ENCODE measurements at regions of chr15 and their contacts with region 1.

Region 1: GRCh38 chr15:40044717-40045571 is 6.0 kb upstream of the SRP14 start:
- DNase-seq: peak; percentile 88 to 93
- ATAC-seq: peak; percentile 90 to 96 (median 94)
- H3K4me3 ChIP-seq: peak overlapping the region; percentile 29
- H3K27ac ChIP-seq: peak overlapping the region; percentile 51
- H3K4me1 ChIP-seq: peaks cover 30% of the 10 kb centered on the region
- H3K27me3 ChIP-seq: no peaks in the 10 kb centered on the region
- CTCF ChIP-seq: peak; percentile 91

Region 2: DNA sequence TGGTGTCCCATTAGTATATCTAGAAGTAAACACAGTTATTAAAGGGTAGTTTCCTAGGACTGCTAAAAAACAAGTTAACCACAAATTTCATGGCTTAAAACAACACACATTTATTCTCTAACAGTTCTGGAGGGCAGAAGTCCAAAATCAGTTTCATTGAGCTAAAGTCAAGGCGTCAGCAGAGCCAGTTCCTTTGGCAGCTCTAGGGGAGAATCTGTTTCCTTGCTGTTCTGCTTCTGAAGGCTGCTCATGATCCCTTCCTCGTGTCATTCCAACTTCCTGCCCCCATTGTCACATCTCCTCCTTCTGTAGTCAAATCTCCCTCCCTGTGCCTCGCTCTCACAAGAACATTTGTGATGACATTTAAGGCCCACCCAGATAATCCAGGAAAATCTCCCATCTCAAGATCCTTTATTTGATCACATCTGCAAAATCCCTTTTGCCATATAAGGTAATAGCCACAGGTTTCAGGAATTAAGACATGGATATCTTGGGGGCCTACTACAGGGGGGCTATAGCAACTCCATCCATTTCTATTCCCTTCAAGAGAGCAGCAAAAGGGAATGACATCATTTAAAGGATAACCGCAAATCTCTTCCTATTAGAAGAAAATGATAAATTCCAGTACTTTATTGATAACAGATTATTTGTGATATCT is 175.0 kb before region 1 on chr15:
- intact Hi-C with region 1: no loop called
- DNase-seq: no peak
- ATAC-seq: no peak
- H3K4me3 ChIP-seq: no peak overlapping the region
- H3K27ac ChIP-seq: no peak overlapping the region
- H3K4me1 ChIP-seq: no peaks in the 10 kb centered on the region
- H3K27me3 ChIP-seq: peaks cover 0 to 5% (median 0%) of the 10 kb centered on the region in 3 donors
- CTCF ChIP-seq: no peak

Region 3: GRCh38 chr15:40108855-40109735 is 64.2 kb after region 1 on chr15 and contains the start of gene BMF:
- intact Hi-C with region 1: loop called in 1 of 2 experiments (anchors 2 kb)
- DNase-seq: peak; percentile 100
- ATAC-seq: peak; percentile 84 to 88 (median 85)
- H3K4me3 ChIP-seq: peak within 1 kb of the TSS; percentile 80
- H3K27ac ChIP-seq: peak within 1 kb of the TSS; percentile 91
- H3K4me1 ChIP-seq: peaks cover 33% of the 10 kb centered on the region
- H3K27me3 ChIP-seq: no peaks in the 10 kb centered on the region
- CTCF ChIP-seq: no peak
- total RNA-seq, gene BMF: 1.5 to 5.9 (median 3.7) TPM

Region 4: DNA sequence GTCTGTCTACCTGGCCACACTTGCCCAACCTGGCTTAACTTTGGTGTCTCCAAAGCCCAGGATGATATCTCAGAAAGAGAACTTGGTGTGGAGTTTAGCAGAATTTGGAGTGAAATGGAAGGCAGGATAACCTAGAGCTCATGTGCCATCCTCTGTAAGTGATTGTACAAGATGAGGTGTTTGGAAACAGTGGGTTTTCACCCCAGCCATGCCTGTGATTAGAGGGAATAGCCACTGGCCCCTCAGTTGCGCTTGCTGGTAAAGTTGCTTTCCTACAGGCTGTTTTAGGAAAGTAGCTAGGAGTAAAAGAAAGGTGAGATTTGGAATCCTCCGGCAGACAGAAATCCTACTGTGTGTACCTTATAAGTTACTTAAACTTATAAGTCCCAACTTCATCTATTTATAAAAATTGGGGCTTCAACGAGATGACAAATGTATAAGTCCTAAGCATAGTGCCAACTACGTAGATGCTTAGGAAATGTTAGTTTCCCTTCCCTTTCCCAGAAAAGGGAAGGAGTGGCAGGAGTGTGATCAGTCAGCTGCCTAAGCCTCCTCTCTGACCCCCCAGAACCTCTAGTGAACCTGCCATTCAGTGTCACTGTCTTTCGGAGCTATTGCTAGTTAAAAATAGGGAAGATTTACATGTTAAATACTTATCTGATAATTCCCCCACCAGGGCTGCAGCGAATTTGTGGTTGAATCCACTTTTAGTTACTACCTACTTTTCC is 77.1 kb after region 1 on chr15:
- intact Hi-C with region 1: no loop called
- DNase-seq: no peak
- ATAC-seq: no peak
- H3K4me3 ChIP-seq: no peak overlapping the region
- H3K27ac ChIP-seq: no peak overlapping the region
- H3K4me1 ChIP-seq: no peaks in the 10 kb centered on the region
- H3K27me3 ChIP-seq: peaks cover 0 to 2% (median 0%) of the 10 kb centered on the region in 3 donors
- CTCF ChIP-seq: no peak

Region 5: GRCh38 chr15:40160689-40161688 is 116.0 kb after region 1 on chr15 and contains the start of gene BUB1B:
- intact Hi-C with region 1: loop called (anchors 5 to 10 kb)
- DNase-seq: peak; percentile 88 to 94
- ATAC-seq: peak; percentile 97 to 100 (median 98)
- H3K4me3 ChIP-seq: peak within 1 kb of the TSS; percentile 69
- H3K27ac ChIP-seq: no peak within 1 kb of the TSS
- H3K4me1 ChIP-seq: no peaks in the 10 kb centered on the region
- H3K27me3 ChIP-seq: no peaks in the 10 kb centered on the region
- CTCF ChIP-seq: no peak
- total RNA-seq, gene BUB1B: 0.71 to 1.0 TPM in 2 of 4 donors, not detected in the others

Region 6: DNA sequence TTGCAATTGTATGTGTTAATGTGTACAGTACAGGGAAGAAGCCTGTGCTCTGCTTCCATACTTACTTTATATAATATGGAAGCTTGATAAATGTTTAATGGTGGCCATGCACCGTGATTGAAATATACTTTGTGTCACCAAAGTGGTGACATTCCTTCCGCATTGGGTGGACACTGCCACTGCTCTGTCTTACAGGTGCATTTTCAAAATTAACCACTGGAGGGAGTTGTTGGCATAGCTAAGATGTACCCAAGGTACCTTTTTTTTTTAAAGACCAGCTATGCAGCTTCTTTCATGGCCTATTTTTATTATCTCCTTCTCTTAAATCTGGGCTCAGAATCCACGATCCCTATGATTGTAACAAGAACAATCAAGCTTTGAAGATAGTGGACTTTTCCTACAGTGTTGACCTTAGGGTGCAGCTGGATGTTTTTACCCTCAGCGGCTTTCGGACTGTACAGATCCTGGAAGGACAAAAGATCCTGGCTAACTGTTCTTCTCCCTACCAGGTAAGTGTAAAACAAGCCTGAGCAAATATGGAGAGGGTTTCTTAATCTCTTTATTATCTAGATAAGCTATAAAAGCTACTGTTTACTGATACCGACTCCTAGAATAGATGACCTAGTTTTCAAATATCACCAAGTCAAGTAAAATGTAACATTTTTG is 172.3 kb after region 1 on chr15:
- intact Hi-C with region 1: loop called (anchors 5 kb)
- DNase-seq: peak in 1 of 2 donors; percentile 10
- ATAC-seq: peak; percentile 89 to 96 (median 92)
- H3K4me3 ChIP-seq: no peak overlapping the region
- H3K27ac ChIP-seq: no peak overlapping the region
- H3K4me1 ChIP-seq: no peaks in the 10 kb centered on the region
- H3K27me3 ChIP-seq: no peaks in the 10 kb centered on the region
- CTCF ChIP-seq: peak; percentile 90

Region 7: GRCh38 chr15:40274350-40275274 is 229.7 kb after region 1 on chr15:
- intact Hi-C with region 1: loop called (anchors 2 kb)
- DNase-seq: peak; percentile 80 to 90
- ATAC-seq: peak; percentile 80 to 91 (median 82)
- H3K4me3 ChIP-seq: no peak overlapping the region
- H3K27ac ChIP-seq: no peak overlapping the region
- H3K4me1 ChIP-seq: no peaks in the 10 kb centered on the region
- H3K27me3 ChIP-seq: peaks cover 0 to 12% (median 8%) of the 10 kb centered on the region in 3 donors
- CTCF ChIP-seq: peak; percentile 100

Region 8: GRCh38 chr15:40440743-40441564 is 396.0 kb after region 1 on chr15 and contains the start of gene BAHD1:
- intact Hi-C with region 1: loop called in 1 of 2 experiments (anchors 10 kb)
- DNase-seq: peak; percentile 97 to 99
- ATAC-seq: peak; percentile 92 to 95 (median 92)
- H3K4me3 ChIP-seq: peak within 1 kb of the TSS; percentile 89
- H3K27ac ChIP-seq: peak within 1 kb of the TSS; percentile 76
- H3K4me1 ChIP-seq: peaks cover 25% of the 10 kb centered on the region
- H3K27me3 ChIP-seq: peaks cover 0 to 25% (median 9%) of the 10 kb centered on the region in 3 donors
- CTCF ChIP-seq: no peak
- total RNA-seq, gene BAHD1: 12.5 to 15.6 (median 13.4) TPM